ENCODE measurements at regions of chr16 and their contacts with region 1.

Region 1: GRCh38 chr16:9761870-9762269 is 420.4 kb downstream of the GRIN2A start:
- DNase-seq: no peak
- H3K4me3 ChIP-seq: no peak overlapping the region
- H3K27ac ChIP-seq: no peak overlapping the region
- H3K4me1 ChIP-seq: no peaks in the 10 kb centered on the region
- H3K27me3 ChIP-seq: no peaks in the 10 kb centered on the region
- CTCF ChIP-seq: no peak
- EP300 ChIP-seq: no peak
- POLR2A ChIP-seq: no peak

Region 2: DNA sequence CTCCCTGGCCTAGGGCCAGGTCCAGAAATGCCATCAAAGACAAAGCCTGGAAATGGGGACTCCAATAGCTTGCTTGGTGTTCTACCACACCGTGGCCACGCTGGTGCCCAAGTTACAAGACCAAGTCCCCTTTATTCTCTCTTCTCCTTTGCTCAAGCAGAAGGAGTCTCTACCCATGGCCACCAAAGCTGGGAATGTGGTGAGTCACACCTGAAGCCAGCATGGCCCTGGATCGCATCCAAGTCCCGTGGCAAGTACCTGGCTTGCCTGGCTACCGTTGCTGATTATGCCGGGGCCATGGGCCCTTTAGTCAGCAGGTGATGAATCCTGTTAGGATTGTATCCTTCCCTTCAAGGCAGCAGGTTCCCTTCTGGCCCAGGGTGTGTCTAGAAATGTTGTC is 410.4 kb before region 1 on chr16:
- intact Hi-C with region 1: loop called in 1 of 4 experiments (anchors 5 kb)
- DNase-seq: no peak
- H3K4me3 ChIP-seq: no peak overlapping the region
- H3K27ac ChIP-seq: no peak overlapping the region
- H3K4me1 ChIP-seq: no peaks in the 10 kb centered on the region
- H3K27me3 ChIP-seq: no peaks in the 10 kb centered on the region
- CTCF ChIP-seq: no peak
- EP300 ChIP-seq: no peak
- POLR2A ChIP-seq: no peak

Region 3: GRCh38 chr16:9741776-9742175 is 20.1 kb before region 1 on chr16:
- intact Hi-C with region 1: no loop called
- DNase-seq: no peak
- H3K4me3 ChIP-seq: no peak overlapping the region
- H3K27ac ChIP-seq: no peak overlapping the region
- H3K4me1 ChIP-seq: no peaks in the 10 kb centered on the region
- H3K27me3 ChIP-seq: no peaks in the 10 kb centered on the region
- CTCF ChIP-seq: no peak
- EP300 ChIP-seq: no peak
- POLR2A ChIP-seq: no peak

Measured in ovary (tissue), 10 donors.